ENCODE measurements at regions of chr10 and their contacts with region 1.

Region 1: GRCh38 chr10:121154846-121155245 is 303.7 kb downstream of the WDR11 start:
- DNase-seq: peak; percentile 11 to 94 (median 80)
- H3K4me3 ChIP-seq: peak overlapping the region in 2 of 59 donors; percentile 20 to 23
- H3K27ac ChIP-seq: peak overlapping the region; percentile 41 to 98 (median 93)
- H3K27me3 ChIP-seq: peaks cover 0 to 3% (median 0%) of the 10 kb centered on the region in 45 donors
- CTCF ChIP-seq: peak in 9 of 56 donors; percentile 9 to 39 (median 18)

Region 2: GRCh38 chr10:120905268-120905667 is 249.6 kb before region 1 on chr10:
- intact Hi-C with region 1: no loop called
- DNase-seq: no peak
- H3K4me3 ChIP-seq: no peak overlapping the region
- H3K27ac ChIP-seq: no peak overlapping the region
- H3K27me3 ChIP-seq: no peaks in the 10 kb centered on the region
- CTCF ChIP-seq: no peak

Region 3: DNA sequence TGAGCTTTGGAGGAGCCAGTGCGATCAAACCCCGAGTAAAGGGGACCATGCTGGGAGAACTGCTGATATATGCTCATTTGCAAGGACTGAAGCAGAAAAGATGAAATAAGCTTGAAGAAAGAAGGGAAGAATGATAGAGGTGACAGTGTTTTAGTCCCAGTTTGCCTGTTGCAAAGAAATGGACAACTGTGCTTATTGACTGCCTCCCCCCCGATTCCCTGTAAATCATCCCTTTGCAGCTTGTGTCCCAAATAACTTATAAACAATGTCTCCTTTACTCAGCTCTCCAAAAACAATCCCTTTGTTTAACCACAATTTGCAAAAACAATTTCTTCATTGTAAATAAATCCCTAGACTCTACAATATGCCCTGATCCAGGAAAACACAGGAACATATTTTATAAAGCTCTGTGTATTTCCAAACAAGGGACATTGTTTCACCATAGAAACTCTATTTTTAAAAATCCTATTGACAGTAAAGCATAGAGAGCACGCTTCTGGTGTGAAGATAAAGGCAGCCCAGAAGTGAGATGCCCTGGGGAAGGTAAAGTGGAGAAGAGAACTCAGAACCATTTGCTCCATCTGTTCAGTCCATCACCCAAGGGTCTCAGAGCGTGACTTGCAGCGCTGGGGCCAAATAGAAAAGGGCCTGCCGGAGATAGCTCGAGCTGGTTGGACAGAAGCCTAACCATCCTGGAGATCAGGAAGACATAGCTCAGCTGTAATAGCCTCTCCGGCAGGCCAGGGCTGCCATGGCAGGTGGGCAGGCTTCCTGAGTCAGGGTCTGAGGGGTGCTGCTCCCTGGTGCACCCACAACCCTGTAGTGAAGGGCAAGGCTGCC is 23.2 kb before region 1 on chr10:
- intact Hi-C with region 1: loop called in 1 of 2 experiments (anchors 2 kb)
- DNase-seq: peak in 2 of 10 donors; percentile 44 to 50
- H3K4me3 ChIP-seq: peak overlapping the region in 3 of 59 donors; percentile 2 to 17 (median 14)
- H3K27ac ChIP-seq: peak overlapping the region; percentile 42 to 99 (median 95)
- H3K27me3 ChIP-seq: no peaks in the 10 kb centered on the region
- CTCF ChIP-seq: peak in 2 of 56 donors; percentile 4 to 6

Region 4: GRCh38 chr10:121188005-121188404 is 33.2 kb after region 1 on chr10:
- intact Hi-C with region 1: loop called (anchors 1 to 2 kb)
- DNase-seq: peak in 2 of 10 donors; percentile 41 to 48
- H3K4me3 ChIP-seq: no peak overlapping the region
- H3K27ac ChIP-seq: peak overlapping the region in 46 of 59 donors; percentile 1 to 89 (median 79)
- H3K27me3 ChIP-seq: no peaks in the 10 kb centered on the region
- CTCF ChIP-seq: peak in 52 of 56 donors; percentile 16 to 67 (median 42)

Region 5: DNA sequence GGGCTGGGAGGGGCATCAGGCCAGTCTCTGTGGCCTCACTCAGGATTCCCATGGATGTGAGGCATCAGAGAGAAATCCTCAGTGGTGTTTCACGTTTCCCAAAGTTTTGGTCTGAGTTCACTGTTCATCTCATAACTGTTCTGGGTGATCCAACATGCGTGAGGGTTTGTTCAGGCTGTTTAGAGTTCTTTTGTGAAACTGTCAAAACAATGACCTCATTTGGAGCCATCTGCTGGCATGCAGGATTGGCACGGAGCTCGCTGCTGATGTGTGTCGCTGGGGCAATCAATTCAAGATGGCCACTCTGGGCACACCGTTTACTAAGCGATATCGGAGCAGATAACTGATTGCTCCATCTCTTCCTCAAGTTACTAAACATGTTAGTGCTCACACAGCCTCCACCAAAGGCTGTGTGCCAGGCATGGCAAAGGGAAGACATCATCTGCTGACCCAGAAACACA is 61.9 kb after region 1 on chr10:
- intact Hi-C with region 1: loop called in 1 of 2 experiments (anchors 1 kb)
- DNase-seq: peak; percentile 5 to 87 (median 76)
- H3K4me3 ChIP-seq: peak overlapping the region in 2 of 59 donors; percentile 8 to 19
- H3K27ac ChIP-seq: peak overlapping the region; percentile 59 to 97 (median 91)
- H3K27me3 ChIP-seq: peaks cover 0 to 6% (median 0%) of the 10 kb centered on the region in 45 donors
- CTCF ChIP-seq: peak in 10 of 56 donors; percentile 5 to 42 (median 26)

Measured in dorsolateral prefrontal cortex (tissue), 120 donors.